IMR-90 (cell line): ENCODE measurements at regions of chr22 and their contacts with region 1.

Region 1: GRCh38 chr22:32545801-32546200 is 71.2 kb downstream of the FBXO7 start:
- DNase-seq: peak; percentile 45
- ATAC-seq: peak; percentile 50
- H3K4me3 ChIP-seq: no peak overlapping the region
- H3K27ac ChIP-seq: peak overlapping the region; percentile 32; the same call in 1 of the 2 replicates
- H3K4me1 ChIP-seq: peaks cover 21% of the 10 kb centered on the region
- H3K27me3 ChIP-seq: peaks cover 6% of the 10 kb centered on the region; the same call in 1 of the 2 replicates
- CTCF ChIP-seq: no peak
- POLR2A ChIP-seq: no peak
- RAD21 ChIP-seq: no peak

Region 2: GRCh38 chr22:32474635-32475467 is 71.0 kb before region 1 on chr22 and contains the start of gene FBXO7:
- CTCF ChIA-PET with region 1: no interaction called
- POLR2A ChIA-PET with region 1: no interaction called
- dilution Hi-C with region 1: no loop called
- in situ Hi-C with region 1: no loop called
- intact Hi-C with region 1: no loop called
- DNase-seq: peak; percentile 90
- ATAC-seq: peak; percentile 88
- H3K4me3 ChIP-seq: peak within 1 kb of the TSS; percentile 67
- H3K27ac ChIP-seq: peak within 1 kb of the TSS; percentile 90
- H3K4me1 ChIP-seq: peaks cover 13% of the 10 kb centered on the region
- H3K27me3 ChIP-seq: no peaks in the 10 kb centered on the region
- CTCF ChIP-seq: peak; percentile 59
- POLR2A ChIP-seq: peak; percentile 86
- RAD21 ChIP-seq: no peak
- total RNA-seq, gene FBXO7: 61.4 and 71.5 TPM in 2 replicates

Region 3: GRCh38 chr22:32489377-32489776 is 56.4 kb before region 1 on chr22:
- CTCF ChIA-PET with region 1: no interaction called
- POLR2A ChIA-PET with region 1: no interaction called
- dilution Hi-C with region 1: no loop called
- in situ Hi-C with region 1: no loop called
- intact Hi-C with region 1: no loop called
- DNase-seq: no peak
- ATAC-seq: no peak
- H3K4me3 ChIP-seq: no peak overlapping the region
- H3K27ac ChIP-seq: no peak overlapping the region
- H3K4me1 ChIP-seq: no peaks in the 10 kb centered on the region; the same call in 1 of the 2 replicates
- H3K27me3 ChIP-seq: no peaks in the 10 kb centered on the region
- CTCF ChIP-seq: no peak
- POLR2A ChIP-seq: no peak
- RAD21 ChIP-seq: no peak

Region 4: DNA sequence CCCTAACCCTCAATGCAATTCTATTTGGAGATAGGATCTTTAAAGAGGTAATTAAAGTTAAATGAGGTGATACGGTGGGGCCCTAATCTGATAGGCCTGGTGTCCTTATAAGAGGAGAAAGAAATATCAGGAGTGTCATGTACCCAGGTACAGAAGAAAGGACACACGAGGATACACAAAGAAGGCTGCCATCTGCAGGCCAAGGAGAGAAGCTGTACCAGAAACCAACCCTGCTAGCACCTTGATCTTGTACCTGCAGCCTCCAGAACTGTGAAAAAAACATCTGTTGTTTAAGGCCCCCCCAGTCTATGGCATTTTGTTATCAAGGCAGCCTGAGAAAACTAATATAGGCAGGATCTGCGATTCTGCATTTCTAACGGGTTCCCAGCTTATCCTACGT is 27.0 kb before region 1 on chr22:
- CTCF ChIA-PET with region 1: no interaction called
- POLR2A ChIA-PET with region 1: no interaction called
- dilution Hi-C with region 1: no loop called
- in situ Hi-C with region 1: no loop called
- intact Hi-C with region 1: no loop called
- DNase-seq: no peak
- ATAC-seq: no peak
- H3K4me3 ChIP-seq: no peak overlapping the region
- H3K27ac ChIP-seq: no peak overlapping the region
- H3K4me1 ChIP-seq: no peaks in the 10 kb centered on the region
- H3K27me3 ChIP-seq: peaks cover 3% of the 10 kb centered on the region
- CTCF ChIP-seq: no peak
- POLR2A ChIP-seq: no peak
- RAD21 ChIP-seq: no peak

Region 5: GRCh38 chr22:32562400-32562799 is 16.6 kb after region 1 on chr22:
- CTCF ChIA-PET with region 1: no interaction called
- POLR2A ChIA-PET with region 1: no interaction called
- dilution Hi-C with region 1: no loop called
- in situ Hi-C with region 1: no loop called
- intact Hi-C with region 1: loop called (anchors 2 kb)
- DNase-seq: no peak
- ATAC-seq: no peak
- H3K4me3 ChIP-seq: no peak overlapping the region
- H3K27ac ChIP-seq: no peak overlapping the region
- H3K4me1 ChIP-seq: peaks cover 13% of the 10 kb centered on the region; the same call in 1 of the 2 replicates
- H3K27me3 ChIP-seq: peaks cover 13% of the 10 kb centered on the region
- CTCF ChIP-seq: no peak
- POLR2A ChIP-seq: no peak
- RAD21 ChIP-seq: no peak